Common myeloid progenitor, CD34-positive (primary cell): ENCODE measurements at regions of chr12 and their contacts with region 1.

Region 1: DNA sequence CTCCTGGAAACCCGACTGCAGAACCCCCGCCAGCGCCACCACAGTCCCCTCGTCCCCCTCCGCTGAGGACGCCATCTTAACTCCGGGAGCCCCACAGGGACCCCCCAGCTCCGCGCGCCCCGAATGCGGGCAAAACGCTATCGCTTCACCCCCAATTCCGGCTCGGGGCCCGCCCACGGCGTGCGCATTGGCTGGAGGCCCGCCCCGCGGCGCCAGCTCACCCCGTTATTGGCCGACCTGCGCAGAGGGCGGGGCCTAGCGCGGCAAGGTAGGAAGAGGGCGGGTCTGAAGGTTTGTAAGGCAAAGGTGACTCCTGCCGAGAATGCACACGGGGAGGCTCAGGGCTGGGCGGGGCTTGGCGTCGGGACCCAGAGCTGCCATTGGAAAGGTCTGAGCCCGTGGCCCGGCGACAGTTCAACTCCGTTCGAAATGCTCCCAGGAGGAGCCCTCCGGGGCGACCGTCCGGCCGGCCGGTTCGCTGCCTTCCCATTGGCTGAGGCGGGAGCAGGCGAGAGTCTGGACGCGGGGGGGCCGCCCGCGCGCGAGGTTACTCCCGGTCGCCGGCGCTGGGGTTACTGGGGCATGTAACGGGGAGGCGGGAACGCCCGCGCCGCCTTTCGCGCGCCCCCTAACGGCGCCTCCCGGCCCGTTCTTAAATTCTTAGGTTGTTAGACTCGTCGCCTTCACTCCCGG is at the start of gene LPCAT3:
- DNase-seq: peak; percentile 96 to 98 (median 98)
- H3K4me3 ChIP-seq: peak within 1 kb of the TSS; percentile 81 to 96 (median 89)
- H3K27ac ChIP-seq: peak within 1 kb of the TSS; percentile 11 to 75
- H3K4me1 ChIP-seq: peaks cover 15 to 29% (median 21%) of the 10 kb centered on the region in 4 experiments
- H3K27me3 ChIP-seq: no peaks in the 10 kb centered on the region

Region 2: DNA sequence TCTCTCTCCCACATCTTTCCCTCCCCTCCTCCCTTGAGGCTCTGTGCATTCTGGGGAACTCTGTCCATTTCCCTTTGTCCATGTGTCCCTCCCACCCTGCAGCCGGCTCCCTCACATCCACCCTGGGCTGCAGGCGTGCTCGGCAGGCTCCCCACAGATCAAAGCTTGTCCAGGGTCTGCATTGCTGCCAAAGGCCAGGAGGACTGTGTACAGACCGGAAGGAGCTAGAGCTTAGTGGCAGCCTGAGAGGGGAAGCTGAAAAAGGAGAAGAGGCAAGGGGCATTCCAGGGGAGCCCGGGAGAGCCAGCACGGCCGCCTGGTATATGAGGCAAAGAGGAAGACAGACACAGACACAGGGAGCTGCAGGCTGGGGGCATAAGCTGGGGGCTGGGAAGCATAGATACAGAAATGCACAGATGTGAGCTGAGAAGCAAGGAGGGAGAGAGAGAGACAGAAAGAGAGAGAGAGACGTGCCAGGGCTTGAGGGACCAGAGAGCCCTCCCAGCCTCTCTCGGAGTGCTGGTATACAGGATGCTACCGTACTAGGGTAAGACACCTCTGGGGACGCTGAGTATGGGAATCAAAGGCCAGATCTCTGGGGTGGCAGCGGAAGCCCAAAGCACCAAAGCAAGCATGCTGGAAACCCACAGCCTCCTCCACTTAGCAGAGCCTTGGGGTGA is 225.8 kb before region 1 on chr12:
- CTCF ChIA-PET with region 1: no interaction called
- POLR2A ChIA-PET with region 1: no interaction called
- DNase-seq: peak; percentile 36 to 86 (median 83)
- H3K4me3 ChIP-seq: peak overlapping the region in 5 of 7 experiments; percentile 6 to 46 (median 29)
- H3K27ac ChIP-seq: no peak overlapping the region
- H3K4me1 ChIP-seq: peaks cover 0 to 42% (median 35%) of the 10 kb centered on the region in 4 experiments
- H3K27me3 ChIP-seq: no peaks in the 10 kb centered on the region

Region 3: DNA sequence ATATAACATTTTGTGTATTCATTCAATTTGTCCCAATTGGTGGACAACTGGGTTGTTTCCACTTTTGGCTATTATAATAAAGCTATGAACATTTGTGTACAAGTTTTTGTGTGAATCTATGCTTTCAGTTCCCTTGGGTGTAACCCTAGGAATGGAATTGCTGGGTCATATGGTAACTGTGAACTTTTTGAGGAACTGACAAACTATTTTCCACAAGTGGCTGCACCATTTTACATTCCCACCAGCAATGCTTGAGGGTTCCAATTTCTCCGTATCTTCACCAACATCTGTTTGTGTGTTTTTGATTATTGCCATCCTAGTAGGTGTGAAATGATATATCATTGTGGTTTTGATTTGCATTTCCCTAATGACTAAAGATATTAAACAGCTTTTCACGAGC is 13.2 kb before region 1 on chr12:
- CTCF ChIA-PET with region 1: interaction called, 14 read pairs
- POLR2A ChIA-PET with region 1: interaction called, 4 read pairs
- DNase-seq: peak in 2 of 3 donors; percentile 64 to 82
- H3K4me3 ChIP-seq: no peak overlapping the region
- H3K27ac ChIP-seq: no peak overlapping the region
- H3K4me1 ChIP-seq: peaks cover 6 to 10% (median 9%) of the 10 kb centered on the region in 4 experiments
- H3K27me3 ChIP-seq: no peaks in the 10 kb centered on the region

Region 4: GRCh38 chr12:7189398-7190267 is 171.1 kb after region 1 on chr12 and contains the start of gene PEX5:
- CTCF ChIA-PET with region 1: no interaction called
- POLR2A ChIA-PET with region 1: no interaction called
- DNase-seq: peak; percentile 88 to 94 (median 93)
- H3K4me3 ChIP-seq: peak within 1 kb of the TSS; percentile 87 to 99 (median 92)
- H3K27ac ChIP-seq: peak within 1 kb of the TSS; percentile 77 to 86
- H3K4me1 ChIP-seq: peaks cover 4 to 30% (median 23%) of the 10 kb centered on the region in 4 experiments
- H3K27me3 ChIP-seq: no peaks in the 10 kb centered on the region

Region 5: GRCh38 chr12:7302266-7302986 is 283.9 kb after region 1 on chr12:
- CTCF ChIA-PET with region 1: no interaction called
- POLR2A ChIA-PET with region 1: no interaction called
- DNase-seq: peak in 1 of 3 donors; percentile 13
- H3K4me3 ChIP-seq: no peak overlapping the region
- H3K27ac ChIP-seq: no peak overlapping the region
- H3K4me1 ChIP-seq: no peaks in the 10 kb centered on the region
- H3K27me3 ChIP-seq: no peaks in the 10 kb centered on the region